ENCODE measurements at regions of chr11 and their contacts with region 1.

Region 1: DNA sequence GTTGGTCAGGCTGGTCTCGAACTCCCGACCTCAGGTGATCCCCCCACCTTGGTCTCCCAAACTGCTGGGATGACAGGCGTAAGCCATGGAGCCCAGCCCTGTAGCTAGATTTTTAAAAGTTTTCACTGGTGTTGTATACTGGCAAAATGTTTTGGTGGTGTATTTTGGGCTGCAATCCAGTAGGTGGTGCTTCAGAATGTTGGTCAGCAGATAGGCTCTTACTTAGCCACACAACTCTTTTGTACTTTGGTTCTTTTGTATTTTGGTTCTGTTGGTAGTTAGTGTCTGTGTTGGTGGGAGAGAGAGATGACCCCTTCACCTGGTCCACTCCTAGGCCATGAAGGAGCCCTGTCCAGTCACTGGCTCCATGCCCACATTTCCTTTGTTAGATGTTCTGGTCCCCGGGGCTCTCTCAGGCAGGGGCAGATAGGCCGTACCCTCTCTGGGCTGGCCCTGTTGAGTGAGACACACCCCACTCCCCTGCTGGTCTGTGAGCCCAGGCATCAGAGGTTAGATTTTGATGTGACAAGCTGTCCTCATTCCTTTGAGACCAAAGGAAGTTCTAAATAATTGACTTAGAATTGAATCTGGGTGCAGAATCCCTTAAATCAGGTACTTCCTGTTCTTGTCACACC is 123.8 kb downstream of the DDX10 start:
- DNase-seq: peak in 1 of 2 experiments; percentile 42
- H3K4me3 ChIP-seq: no peak overlapping the region
- H3K4me3 Mint-ChIP-seq: no peak overlapping the region
- H3K27ac Mint-ChIP-seq: no peak overlapping the region
- H3K4me1 ChIP-seq: peaks cover 10% of the 10 kb centered on the region
- H3K4me1 Mint-ChIP-seq: peaks cover 12% of the 10 kb centered on the region
- H3K27me3 ChIP-seq: no peaks in the 10 kb centered on the region
- H3K27me3 Mint-ChIP-seq: no peaks in the 10 kb centered on the region
- CTCF ChIP-seq: peak; percentile 54 to 56

Region 2: GRCh38 chr11:108751444-108751843 is 37.2 kb before region 1 on chr11:
- CTCF ChIA-PET with region 1: no interaction called
- POLR2A ChIA-PET with region 1: no interaction called
- intact Hi-C with region 1: loop called (anchors 2 kb)
- DNase-seq: no peak
- H3K4me3 ChIP-seq: no peak overlapping the region
- H3K4me3 Mint-ChIP-seq: no peak overlapping the region
- H3K27ac Mint-ChIP-seq: no peak overlapping the region
- H3K4me1 ChIP-seq: peaks cover 5% of the 10 kb centered on the region; the same call in 1 of the 2 replicates
- H3K4me1 Mint-ChIP-seq: peaks cover 7% of the 10 kb centered on the region
- H3K27me3 ChIP-seq: no peaks in the 10 kb centered on the region
- H3K27me3 Mint-ChIP-seq: no peaks in the 10 kb centered on the region
- CTCF ChIP-seq: no peak

Region 3: DNA sequence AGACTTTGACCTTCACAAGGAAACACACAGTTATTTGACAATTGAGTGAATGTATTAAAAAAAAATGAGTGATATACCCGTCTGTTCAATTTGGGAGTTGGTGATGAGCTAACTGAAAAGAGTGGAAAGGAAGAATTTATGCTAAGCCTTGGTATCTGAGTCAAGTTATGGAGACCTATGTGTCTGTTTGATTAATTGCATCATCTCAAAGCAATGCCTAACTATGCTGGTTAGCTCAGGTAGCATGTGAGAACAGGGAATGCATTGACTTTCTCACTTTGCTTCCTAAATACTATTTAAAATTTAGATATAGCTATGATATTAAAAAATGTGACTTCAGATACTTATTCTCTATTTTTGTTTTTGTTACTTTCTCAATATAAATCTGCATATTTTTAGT is 13.4 kb before region 1 on chr11:
- CTCF ChIA-PET with region 1: no interaction called
- POLR2A ChIA-PET with region 1: no interaction called
- intact Hi-C with region 1: no loop called
- DNase-seq: no peak
- H3K4me3 ChIP-seq: no peak overlapping the region
- H3K4me3 Mint-ChIP-seq: no peak overlapping the region
- H3K27ac Mint-ChIP-seq: no peak overlapping the region
- H3K4me1 ChIP-seq: peaks cover 9% of the 10 kb centered on the region; the same call in 1 of the 2 replicates
- H3K4me1 Mint-ChIP-seq: peaks cover 7% of the 10 kb centered on the region
- H3K27me3 ChIP-seq: no peaks in the 10 kb centered on the region
- H3K27me3 Mint-ChIP-seq: no peaks in the 10 kb centered on the region
- CTCF ChIP-seq: no peak

Region 4: DNA sequence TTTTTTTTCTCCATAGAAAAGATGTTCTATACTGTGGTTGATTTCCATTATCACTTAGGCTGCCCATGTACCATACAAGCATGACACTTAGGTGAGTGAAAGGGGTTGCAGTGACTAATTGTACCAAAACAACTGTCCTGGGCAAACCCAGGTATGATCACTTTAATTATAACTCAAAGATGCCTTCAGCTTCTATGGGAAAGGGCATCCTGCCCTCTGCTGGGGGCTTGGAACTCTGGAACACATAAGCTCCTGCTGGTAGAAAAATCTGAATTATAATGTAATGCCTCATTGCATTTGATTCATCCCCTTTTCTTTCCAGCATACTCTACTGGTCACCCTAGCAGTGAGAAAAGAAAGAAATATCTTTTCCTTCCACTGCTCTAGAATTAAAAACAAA is 82.5 kb after region 1 on chr11:
- CTCF ChIA-PET with region 1: interaction called, 15 read pairs
- POLR2A ChIA-PET with region 1: no interaction called
- intact Hi-C with region 1: loop called (anchors 1 kb)
- DNase-seq: peak; percentile 55 to 64
- H3K4me3 ChIP-seq: no peak overlapping the region
- H3K4me3 Mint-ChIP-seq: no peak overlapping the region
- H3K27ac Mint-ChIP-seq: no peak overlapping the region
- H3K4me1 ChIP-seq: no peaks in the 10 kb centered on the region
- H3K4me1 Mint-ChIP-seq: no peaks in the 10 kb centered on the region
- H3K27me3 ChIP-seq: no peaks in the 10 kb centered on the region
- H3K27me3 Mint-ChIP-seq: no peaks in the 10 kb centered on the region
- CTCF ChIP-seq: peak; percentile 73 to 91

Measured in Caco-2 (cell line).